Activated T-helper 1 cell treated with anti-CD3 and anti-CD28 coated beads, Interleukin-12 subunit alpha, Interleukin-12 subunit beta, Interleukin-2, Interleukin-4 antibody, amounts not matched to agents 30 ng/mL and 10 ng/mL and 1 ng/mL, durations not matched to agents 14 hours and 24 hours and 36 hours (primary cell): ENCODE measurements at regions of chr7 and their contacts with region 1.

Region 1: DNA sequence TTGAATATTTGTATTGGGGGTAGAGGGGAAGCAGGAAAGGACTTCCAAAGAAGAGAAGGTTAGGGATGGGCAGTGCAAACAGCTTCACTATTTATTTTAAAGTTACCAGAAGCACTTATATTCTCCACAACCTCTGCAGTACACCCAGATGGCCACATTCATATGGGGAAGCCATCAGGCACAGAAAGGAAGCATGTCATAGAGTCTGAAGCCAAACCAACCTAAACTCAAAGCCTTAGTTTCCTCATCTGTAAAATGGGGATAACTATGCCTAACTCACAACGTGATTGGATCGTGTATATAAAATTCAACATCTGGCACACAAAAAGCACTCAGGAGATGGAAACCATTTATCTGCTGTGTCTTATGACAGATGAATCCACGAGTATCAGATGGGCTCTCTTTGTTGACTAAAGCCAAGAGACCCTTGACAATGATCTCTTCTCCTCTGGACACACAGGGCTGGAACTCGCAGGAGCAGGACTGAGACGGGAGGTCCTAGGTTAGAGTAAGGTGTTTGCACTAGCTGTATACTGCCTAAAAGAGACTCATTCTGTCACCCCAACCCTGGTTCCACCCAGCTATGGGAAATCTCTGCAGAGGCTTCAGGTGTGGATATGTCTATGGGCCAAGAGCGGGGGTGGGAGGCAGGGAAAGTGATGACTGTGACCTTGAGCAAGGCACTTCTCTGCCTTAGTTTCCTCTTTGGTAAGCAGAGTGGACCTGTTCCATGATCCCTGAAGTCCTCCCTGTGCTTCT is 1.8 kb downstream of the KIAA1549 start:
- DNase-seq: no peak
- H3K4me3 Mint-ChIP-seq: peak overlapping the region; percentile 59
- H3K27ac Mint-ChIP-seq: no peak overlapping the region
- H3K4me1 Mint-ChIP-seq: peaks cover 9% of the 10 kb centered on the region
- H3K27me3 Mint-ChIP-seq: peaks cover 56% of the 10 kb centered on the region

Region 2: DNA sequence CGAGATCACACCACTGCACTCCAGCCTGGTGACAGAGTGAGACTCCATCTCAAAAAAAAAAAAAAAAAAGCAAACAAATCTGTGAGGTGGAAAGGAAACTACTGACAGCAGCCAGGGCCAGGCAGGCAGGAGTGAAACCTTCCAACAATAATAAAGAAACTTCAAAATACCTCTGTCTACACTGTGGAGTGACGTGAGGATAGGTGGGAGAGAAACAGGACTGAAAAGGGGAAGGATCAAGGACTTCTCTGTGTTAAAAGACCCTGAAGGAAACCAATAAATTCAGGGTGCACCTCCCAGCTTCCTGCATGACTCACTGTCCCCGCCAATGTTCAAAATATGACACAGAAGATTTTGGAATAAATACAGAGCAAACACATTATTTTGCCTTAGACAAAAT is 81.1 kb before region 1 on chr7:
- intact Hi-C with region 1: loop called (anchors 5 kb)
- DNase-seq: no peak
- H3K4me3 Mint-ChIP-seq: peak overlapping the region; percentile 31
- H3K27ac Mint-ChIP-seq: peak overlapping the region; percentile 70
- H3K4me1 Mint-ChIP-seq: peaks cover 38% of the 10 kb centered on the region
- H3K27me3 Mint-ChIP-seq: peaks cover 27% of the 10 kb centered on the region

Region 3: DNA sequence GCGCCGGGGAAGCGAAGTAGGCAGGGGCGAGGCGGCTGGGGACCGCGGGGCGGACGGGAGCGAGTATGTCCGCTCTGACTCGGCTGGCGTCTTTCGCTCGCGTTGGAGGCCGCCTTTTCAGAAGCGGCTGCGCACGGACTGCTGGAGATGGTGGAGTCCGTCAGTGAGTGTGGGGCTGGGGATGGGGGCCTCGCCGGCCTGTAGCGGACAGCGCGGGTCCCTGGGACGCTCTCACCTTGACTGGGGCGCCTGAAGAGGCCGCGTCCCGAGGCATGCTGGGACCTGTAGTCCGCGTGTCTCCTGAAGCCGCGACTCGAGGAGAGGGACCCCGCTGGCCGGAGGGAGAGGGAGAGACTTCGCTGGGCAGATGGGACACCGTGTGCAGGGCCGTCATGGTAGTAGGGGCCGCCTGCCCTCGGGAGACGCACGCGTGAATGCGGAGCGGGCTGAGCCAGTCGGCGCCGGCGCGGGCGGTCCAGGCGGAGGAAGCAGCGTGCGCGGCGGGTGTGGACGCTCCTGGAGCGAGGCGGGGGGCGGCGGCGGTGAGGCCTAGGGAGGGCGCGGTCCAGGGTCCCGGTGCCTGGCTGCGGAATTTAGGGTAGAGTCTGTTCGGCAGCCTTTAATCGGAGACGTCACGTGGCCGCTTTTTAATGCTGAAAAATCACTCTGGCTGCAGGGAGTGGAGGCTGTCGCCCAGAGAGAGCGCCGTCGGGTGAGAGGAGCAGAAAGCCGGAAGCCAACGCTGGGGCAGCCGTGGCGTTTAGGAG is 1717.5 kb after region 1 on chr7 and contains the start of gene NDUFB2:
- intact Hi-C with region 1: no loop called
- DNase-seq: peak; percentile 85
- H3K4me3 Mint-ChIP-seq: peak within 1 kb of the TSS; percentile 90
- H3K27ac Mint-ChIP-seq: peak within 1 kb of the TSS; percentile 96
- H3K4me1 Mint-ChIP-seq: peaks cover 30% of the 10 kb centered on the region
- H3K27me3 Mint-ChIP-seq: no peaks in the 10 kb centered on the region
- total RNA-seq, gene NDUFB2: 178 and 194 TPM in 2 replicates